Caco-2 (cell line): ENCODE measurements at regions of chr17 and their contacts with region 1.

Region 1: DNA sequence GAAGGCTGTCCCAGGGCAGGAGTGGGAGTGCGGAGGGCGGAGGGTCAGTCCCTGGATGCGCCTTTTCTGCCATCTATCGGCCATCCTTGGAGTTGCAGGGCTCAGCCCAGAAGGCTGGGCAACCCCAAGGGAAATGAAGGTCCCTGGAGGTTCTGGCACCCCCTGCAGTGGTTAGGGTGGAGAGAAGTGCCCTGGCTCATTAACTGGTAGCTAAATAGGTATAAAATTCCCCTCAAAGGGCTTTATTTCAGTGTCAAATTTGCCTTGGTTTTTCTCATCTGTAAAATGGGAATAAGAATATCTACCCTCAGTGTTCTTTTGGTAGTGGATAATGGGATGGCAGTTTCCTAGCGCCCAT is 22.4 kb downstream of the C17orf75 start:
- DNase-seq: peak; percentile 78 to 90
- H3K4me3 ChIP-seq: no peak overlapping the region
- H3K4me3 Mint-ChIP-seq: no peak overlapping the region
- H3K27ac Mint-ChIP-seq: no peak overlapping the region
- H3K4me1 ChIP-seq: no peaks in the 10 kb centered on the region
- H3K4me1 Mint-ChIP-seq: peaks cover 8% of the 10 kb centered on the region
- H3K27me3 ChIP-seq: no peaks in the 10 kb centered on the region
- H3K27me3 Mint-ChIP-seq: peaks cover 2% of the 10 kb centered on the region
- CTCF ChIP-seq: peak; percentile 98 to 99

Region 2: GRCh38 chr17:32265192-32265923 is 54.2 kb before region 1 on chr17 and contains the start of gene RHBDL3:
- CTCF ChIA-PET with region 1: no interaction called
- POLR2A ChIA-PET with region 1: no interaction called
- intact Hi-C with region 1: loop called (anchors 5 kb)
- DNase-seq: peak in 1 of 2 experiments; percentile 27
- H3K4me3 ChIP-seq: peak within 1 kb of the TSS; percentile 48
- H3K4me3 Mint-ChIP-seq: peak within 1 kb of the TSS; percentile 71
- H3K27ac Mint-ChIP-seq: no peak within 1 kb of the TSS
- H3K4me1 ChIP-seq: peaks cover 4% of the 10 kb centered on the region; the same call in 1 of the 2 replicates
- H3K4me1 Mint-ChIP-seq: peaks cover 7% of the 10 kb centered on the region
- H3K27me3 ChIP-seq: peaks cover 6% of the 10 kb centered on the region
- H3K27me3 Mint-ChIP-seq: peaks cover 32% of the 10 kb centered on the region
- CTCF ChIP-seq: no peak
- total RNA-seq, gene RHBDL3: 0.09 TPM in 1 of 2 replicates, not detected in the other